ENCODE measurements at regions of chr1 and their contacts with region 1.

Region 1: DNA sequence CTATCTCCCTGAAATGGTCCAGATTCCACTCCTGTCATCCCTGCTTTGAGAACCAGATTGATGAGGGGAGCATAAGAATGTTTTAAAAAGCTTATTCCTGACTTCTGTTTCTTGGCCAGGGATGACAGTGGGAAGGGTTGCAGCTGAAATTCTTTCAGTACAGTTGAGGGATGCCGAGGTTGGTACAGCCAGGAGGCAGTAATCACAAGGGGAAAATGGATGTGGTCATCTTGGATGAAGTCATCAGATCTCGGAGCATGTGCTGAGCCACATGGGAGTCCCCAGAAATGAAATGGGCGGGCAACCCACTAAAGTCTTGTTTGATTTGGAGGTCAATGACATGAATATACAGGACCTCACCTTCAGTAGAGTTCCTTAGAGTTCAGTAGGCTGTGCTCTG is 18.7 kb upstream of the PLA2G2E start:
- DNase-seq: no peak

Region 2: DNA sequence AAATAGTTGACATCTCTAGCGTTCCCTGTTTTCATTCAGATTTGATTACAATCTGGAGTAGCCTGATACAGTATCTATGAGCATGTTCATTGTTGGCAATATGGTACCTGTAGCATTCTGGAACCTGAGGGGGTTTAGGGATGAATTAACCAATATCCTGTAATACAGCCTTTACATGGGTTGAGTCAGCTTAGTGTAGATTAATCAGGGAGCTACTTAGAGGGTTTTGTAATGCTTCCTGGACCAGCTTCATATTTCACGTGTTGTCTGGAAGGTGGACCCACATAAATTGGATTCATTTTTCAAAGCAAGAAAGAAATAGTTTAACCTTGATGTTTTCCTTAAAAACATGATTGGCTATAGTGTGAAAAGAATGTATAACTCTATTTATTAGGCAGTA is 56.3 kb before region 1 on chr1:
- intact Hi-C with region 1: loop called in 1 of 2 experiments (anchors 2 kb)
- DNase-seq: no peak

Region 3: DNA sequence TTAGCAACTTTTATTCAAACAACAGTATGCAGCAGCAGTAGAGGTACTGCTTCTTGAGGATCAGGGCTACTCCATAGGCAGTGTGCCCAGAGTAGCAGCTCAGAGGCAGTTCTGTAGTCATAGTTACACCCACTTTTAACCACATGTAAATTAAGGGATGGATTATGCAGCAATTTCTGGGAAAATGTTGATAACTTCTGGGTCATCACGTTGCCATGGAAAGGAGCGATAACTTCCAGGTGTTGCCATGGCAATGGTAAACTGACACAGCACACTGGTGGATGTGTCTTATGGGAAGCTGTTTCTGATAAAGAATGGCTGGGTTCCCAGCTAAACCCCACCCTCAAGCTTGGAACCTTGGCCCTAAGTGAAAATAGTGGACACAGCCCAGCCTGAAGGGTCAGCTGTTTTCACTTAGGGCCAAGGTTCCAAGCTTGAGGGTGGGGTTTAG is 66.3 kb after region 1 on chr1:
- intact Hi-C with region 1: loop called in 1 of 2 experiments (anchors 2 kb)
- DNase-seq: peak; percentile 82

Measured in posterior vena cava (tissue), 2 donors.